RWPE1 (cell line): ENCODE measurements at regions of chr6 and their contacts with region 1.

Region 1: DNA sequence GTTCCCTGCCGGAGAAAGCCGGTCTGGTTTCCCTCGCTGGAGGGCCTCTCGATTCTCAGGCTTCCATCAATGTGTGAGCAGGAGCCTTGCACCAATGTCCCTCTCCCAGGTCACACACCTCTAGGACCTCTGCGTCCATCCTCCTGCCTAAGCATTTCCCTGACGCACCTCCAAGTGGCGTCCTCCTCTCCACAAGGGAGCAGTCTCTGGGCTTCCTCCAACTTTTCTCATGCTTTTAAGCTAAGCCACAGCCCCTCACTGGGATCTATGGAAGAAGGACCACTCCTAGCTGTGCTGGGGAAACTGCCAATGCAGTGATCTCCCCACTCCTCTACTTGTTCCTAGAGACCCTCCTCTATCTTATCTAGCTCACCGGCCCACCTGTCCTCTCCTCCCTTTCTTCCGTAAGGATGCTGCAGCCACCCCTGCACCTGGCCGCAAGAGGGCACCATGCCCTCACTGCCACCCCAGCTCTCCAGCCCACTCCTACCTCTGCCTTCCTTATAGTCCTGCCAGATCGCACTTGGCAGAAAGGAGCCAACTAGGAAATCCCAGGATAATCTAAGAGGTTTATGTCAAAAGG is 258.7 kb downstream of the LRFN2 start:
- DNase-seq: peak; percentile 76
- H3K27ac ChIP-seq: no peak overlapping the region
- CTCF ChIP-seq: peak; percentile 46

Region 2: GRCh38 chr6:40587240-40588069 is 259.0 kb after region 1 on chr6 and contains the start of gene LRFN2:
- CTCF ChIA-PET with region 1: interaction called, 13 read pairs
- POLR2A ChIA-PET with region 1: no interaction called
- DNase-seq: peak; percentile 59
- H3K27ac ChIP-seq: no peak within 1 kb of the TSS
- CTCF ChIP-seq: peak; percentile 73